ENCODE measurements at regions of chr10 and their contacts with region 1.

Region 1: GRCh38 chr10:49526619-49527018 is 12.3 kb downstream of the ERCC6 start:
- DNase-seq: no peak

Region 2: GRCh38 chr10:48856855-48857254 is 669.8 kb before region 1 on chr10:
- in situ Hi-C with region 1: no loop called
- DNase-seq: no peak

Region 3: DNA sequence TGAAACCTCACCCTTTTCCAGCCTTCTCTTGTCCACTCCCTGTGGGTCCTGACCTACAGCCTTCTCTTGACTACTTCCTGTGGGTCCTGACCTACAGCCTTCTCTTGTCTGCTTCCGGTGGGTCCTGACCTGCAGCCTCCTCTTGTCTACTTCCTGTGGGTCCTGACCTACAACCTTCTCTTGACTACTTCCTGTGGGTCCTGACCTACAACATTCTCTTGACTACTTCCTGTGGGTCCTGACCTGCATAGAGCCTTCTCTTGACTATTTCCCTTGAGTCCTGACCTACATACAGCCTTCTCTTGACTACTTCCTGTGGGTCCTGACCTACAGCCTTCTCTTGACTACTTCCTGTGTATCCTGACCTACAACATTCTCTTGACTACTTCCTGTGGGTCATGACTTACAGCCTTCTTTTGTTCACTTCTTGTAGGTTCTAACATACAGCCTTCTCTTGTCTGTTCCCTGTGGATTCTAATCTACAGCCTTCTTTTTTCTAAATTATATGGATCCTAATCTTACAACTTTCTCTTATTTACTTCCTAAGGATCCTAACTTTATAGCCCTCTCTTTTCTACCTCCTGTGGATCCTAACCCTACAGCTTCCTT is 191.2 kb before region 1 on chr10:
- in situ Hi-C with region 1: no loop called
- DNase-seq: no peak

Region 4: GRCh38 chr10:49379596-49380410 is 146.8 kb before region 1 on chr10:
- in situ Hi-C with region 1: loop called (anchors 10 kb)
- DNase-seq: no peak